Left lung (tissue), 14 donors: ENCODE measurements at regions of chr14 and their contacts with region 1.

Region 1: GRCh38 chr14:105281371-105282097 is 19.3 kb downstream of the BRF1 start:
- DNase-seq: peak in 1 of 4 donors; percentile 68
- ATAC-seq: peak; percentile 80
- H3K4me3 ChIP-seq: no peak overlapping the region
- H3K27ac ChIP-seq: no peak overlapping the region
- H3K4me1 ChIP-seq: peaks cover 3 to 10% of the 10 kb centered on the region in 2 donors
- H3K27me3 ChIP-seq: no peaks in the 10 kb centered on the region
- CTCF ChIP-seq: peak; percentile 27 to 43

Region 2: DNA sequence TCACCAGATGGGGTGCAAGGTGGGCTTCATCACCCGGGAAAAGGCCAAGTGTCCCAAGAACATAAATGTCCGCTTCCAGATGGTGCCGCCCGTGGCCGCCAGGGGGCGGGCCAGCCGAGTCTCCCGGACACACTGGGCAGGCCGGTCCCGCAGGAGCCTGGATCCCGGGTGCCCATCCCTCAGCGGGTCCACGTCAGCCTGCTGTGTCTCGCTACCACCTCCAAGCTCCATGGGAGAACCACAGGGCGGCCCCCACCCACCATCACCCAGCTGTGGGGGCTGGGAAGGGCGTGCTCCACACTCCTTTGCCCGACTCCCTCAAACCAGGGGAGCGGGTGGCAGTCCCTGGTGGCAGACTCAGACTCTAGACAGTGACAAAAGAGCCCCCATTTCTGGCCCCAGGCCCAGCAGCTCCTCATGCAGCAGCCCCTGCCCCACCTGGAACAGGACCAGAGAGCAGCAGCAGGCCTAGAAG is 78.4 kb before region 1 on chr14:
- intact Hi-C with region 1: loop called in 1 of 2 experiments (anchors 5 kb)
- DNase-seq: peak; percentile 65 to 95 (median 73)
- ATAC-seq: peak; percentile 64
- H3K4me3 ChIP-seq: no peak overlapping the region
- H3K27ac ChIP-seq: no peak overlapping the region
- H3K4me1 ChIP-seq: peaks cover 15 to 46% of the 10 kb centered on the region in 2 donors
- H3K27me3 ChIP-seq: peaks cover 0 to 41% of the 10 kb centered on the region in 2 donors
- CTCF ChIP-seq: peak; percentile 90 to 97